Caki2 (cell line): ENCODE measurements at regions of chr5 and their contacts with region 1.

Region 1: GRCh38 chr5:132334812-132335211 is 34.7 kb upstream of the SLC22A5 start:
- DNase-seq: peak; percentile 20

Region 2: GRCh38 chr5:131453826-131454225 is 881.0 kb before region 1 on chr5:
- in situ Hi-C with region 1: no loop called
- DNase-seq: no peak

Region 3: DNA sequence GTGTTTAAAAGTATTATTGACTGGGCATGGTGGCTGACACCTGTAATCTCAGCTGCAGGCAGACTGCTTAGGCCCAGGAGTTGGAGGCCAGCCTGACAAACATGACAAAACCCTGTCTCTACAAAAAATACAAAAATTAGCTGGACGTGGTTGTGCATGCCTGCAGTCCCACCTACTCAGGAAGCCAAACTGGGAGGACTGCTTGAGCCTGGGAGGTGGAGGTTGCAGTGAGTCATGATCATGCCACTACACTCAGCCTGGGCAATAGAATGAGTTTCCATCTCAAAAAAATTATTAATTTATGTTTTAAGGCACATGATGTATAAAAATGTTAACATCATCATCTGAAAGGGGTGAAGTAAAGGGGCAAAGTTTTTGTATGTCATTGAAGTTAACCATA is 488.3 kb before region 1 on chr5:
- in situ Hi-C with region 1: no loop called
- DNase-seq: no peak

Region 4: DNA sequence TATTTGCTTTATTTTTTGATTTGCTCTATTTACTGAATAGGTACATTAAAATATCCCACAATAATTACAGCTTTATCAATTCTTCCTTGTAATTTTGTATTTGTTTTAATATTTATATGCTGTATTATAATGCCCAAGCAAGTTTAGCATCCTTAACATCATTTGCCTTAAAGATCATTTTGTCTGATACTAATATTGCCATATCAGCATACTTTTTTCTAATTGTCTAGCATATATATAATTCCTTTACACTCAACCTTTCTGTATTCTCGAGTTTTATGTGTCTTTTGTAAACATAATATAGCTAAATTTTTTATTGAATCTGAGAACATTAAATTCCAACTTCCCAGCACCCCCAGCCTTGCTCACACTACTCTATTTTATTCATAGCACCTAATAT is 171.9 kb before region 1 on chr5:
- in situ Hi-C with region 1: no loop called
- DNase-seq: no peak

Region 5: DNA sequence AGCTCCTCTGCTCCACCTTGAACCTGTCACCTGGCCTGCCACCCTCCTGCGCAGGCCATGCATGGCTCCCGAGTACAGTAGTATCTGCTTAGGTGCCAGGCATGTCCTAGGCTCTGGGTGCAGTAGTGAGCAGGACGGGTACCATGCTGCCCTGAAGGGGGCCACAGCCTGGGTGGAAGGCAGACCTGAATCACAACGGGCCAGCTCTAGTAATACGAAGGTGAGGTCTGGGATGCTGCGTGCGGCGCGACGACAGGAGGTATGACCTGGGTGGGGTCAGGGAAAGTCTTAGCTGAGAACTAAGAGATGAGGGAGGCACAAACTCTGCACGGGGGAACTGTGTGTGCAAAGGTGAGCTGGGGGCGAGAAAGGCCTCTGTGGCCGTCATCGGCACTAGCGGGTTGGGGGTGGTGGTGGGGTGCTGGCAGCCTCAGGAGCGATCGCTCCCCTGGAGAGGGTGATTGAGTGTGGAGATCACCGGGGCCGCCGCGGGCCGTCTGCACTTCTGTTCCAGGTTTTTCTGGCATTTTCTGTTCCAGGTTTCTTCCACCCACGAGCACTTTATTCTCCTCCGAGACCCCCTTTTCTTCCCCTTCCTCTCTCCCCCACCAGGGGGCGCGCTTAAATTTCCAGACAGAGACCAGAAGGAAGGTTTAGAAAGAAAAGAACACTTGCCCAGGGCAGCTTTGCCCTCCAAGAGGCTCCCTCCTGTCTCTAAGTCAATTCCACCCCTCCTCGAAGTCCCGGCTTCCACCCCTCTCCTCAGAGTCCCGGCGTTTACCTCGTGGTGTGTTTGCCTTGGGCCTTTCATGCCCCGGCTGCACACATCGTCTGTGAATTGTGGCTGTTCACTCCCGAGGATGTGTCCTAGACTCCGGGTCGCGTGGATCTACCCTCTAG is 62.3 kb before region 1 on chr5:
- in situ Hi-C with region 1: loop called (anchors 10 kb)
- DNase-seq: peak; percentile 52

Region 6: GRCh38 chr5:132540764-132541163 is 206.0 kb after region 1 on chr5:
- in situ Hi-C with region 1: no loop called
- DNase-seq: no peak